T-cell (primary cell): ENCODE measurements at regions of chr5 and their contacts with region 1.

Region 1: DNA sequence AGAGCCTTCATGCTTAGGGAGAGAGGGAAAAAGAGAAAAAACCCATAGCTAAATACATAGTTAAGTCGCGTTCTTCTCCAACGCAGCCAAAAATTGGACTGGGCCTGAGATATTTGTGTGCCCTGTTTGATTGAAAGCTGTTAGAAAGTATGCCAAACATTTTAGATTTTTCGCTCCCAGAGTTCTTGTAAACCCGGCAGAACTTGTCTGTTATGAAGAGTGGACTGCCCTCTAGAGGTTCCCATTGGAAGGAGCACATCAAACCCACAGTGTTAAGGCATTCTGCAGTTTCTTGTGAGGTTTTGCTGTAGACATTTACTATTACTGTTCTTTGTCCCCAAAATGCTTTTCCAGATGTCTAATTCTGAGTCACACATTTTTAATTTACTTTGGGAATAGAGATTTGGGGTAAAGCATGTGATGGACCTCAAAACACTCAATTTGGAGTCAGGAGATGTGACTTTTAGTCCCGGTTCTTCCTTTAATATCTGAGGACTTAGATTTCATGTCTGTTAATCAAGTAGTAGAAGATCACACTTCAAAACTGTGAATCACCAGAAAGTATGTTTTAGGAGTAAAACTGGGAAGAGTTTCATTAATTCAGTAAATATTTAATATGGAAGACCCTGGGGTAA is 96.6 kb downstream of the PCSK1 start:
- DNase-seq: peak in 33 of 35 experiments; percentile 3 to 81 (median 43)
- ATAC-seq: peak; percentile 81 to 92 (median 84)
- H3K4me3 ChIP-seq: no peak overlapping the region
- H3K4me3 Mint-ChIP-seq: no peak overlapping the region
- H3K27ac ChIP-seq: no peak overlapping the region
- H3K27ac Mint-ChIP-seq: no peak overlapping the region
- H3K4me1 ChIP-seq: no peaks in the 10 kb centered on the region
- H3K4me1 Mint-ChIP-seq: no peaks in the 10 kb centered on the region
- H3K27me3 ChIP-seq: peaks cover 0 to 10% of the 10 kb centered on the region in 2 experiments
- H3K27me3 Mint-ChIP-seq: peaks cover 9 to 16% of the 10 kb centered on the region in 2 donors

Region 2: DNA sequence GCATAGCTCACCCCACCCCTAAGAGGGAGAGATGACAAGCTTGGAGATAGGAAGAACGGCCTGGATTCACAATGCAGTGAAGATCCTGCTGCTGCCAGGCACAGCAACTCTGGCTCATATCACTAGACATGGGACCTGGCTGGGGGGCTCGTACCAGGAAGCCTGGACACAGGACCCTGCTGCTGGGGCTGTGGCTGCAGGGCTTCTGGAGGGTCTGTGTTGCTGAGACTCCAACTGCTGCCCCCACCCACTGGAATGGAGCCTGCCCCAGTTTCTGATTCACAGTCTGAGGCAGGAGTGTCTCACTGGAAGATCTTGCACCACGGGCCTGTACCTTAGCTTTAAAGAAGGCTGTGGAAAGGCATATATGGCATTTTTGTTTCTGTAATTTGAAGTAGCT is 483.0 kb before region 1 on chr5:
- CTCF ChIA-PET with region 1: interaction called, 6 to 42 read pairs
- POLR2A ChIA-PET with region 1: no interaction called
- DNase-seq: no peak
- ATAC-seq: no peak
- H3K4me3 ChIP-seq: no peak overlapping the region
- H3K4me3 Mint-ChIP-seq: no peak overlapping the region
- H3K27ac ChIP-seq: no peak overlapping the region
- H3K27ac Mint-ChIP-seq: no peak overlapping the region
- H3K4me1 ChIP-seq: peaks cover 0 to 2% of the 10 kb centered on the region in 2 experiments
- H3K4me1 Mint-ChIP-seq: peaks cover 0 to 4% (median 3%) of the 10 kb centered on the region in 3 donors
- H3K27me3 ChIP-seq: peaks cover 0 to 12% of the 10 kb centered on the region in 2 experiments
- H3K27me3 Mint-ChIP-seq: peaks cover 0 to 3% of the 10 kb centered on the region in 2 donors

Region 3: GRCh38 chr5:95858661-95859326 is 477.7 kb before region 1 on chr5:
- CTCF ChIA-PET with region 1: interaction called, 10 to 42 read pairs
- POLR2A ChIA-PET with region 1: no interaction called
- DNase-seq: peak; percentile 71 to 92 (median 86)
- ATAC-seq: peak; percentile 92 to 97 (median 94)
- H3K4me3 ChIP-seq: peak overlapping the region; percentile 16 to 26
- H3K4me3 Mint-ChIP-seq: peak overlapping the region in 2 of 3 donors; percentile 36 to 59
- H3K27ac ChIP-seq: no peak overlapping the region
- H3K27ac Mint-ChIP-seq: peak overlapping the region; percentile 60 to 64
- H3K4me1 ChIP-seq: peaks cover 6 to 12% of the 10 kb centered on the region in 2 experiments
- H3K4me1 Mint-ChIP-seq: peaks cover 28 to 46% (median 41%) of the 10 kb centered on the region in 3 donors
- H3K27me3 ChIP-seq: peaks cover 0 to 11% of the 10 kb centered on the region in 2 experiments
- H3K27me3 Mint-ChIP-seq: peaks cover 9 to 15% of the 10 kb centered on the region in 2 donors

Region 4: GRCh38 chr5:96235008-96235910 is 101.2 kb before region 1 on chr5:
- CTCF ChIA-PET with region 1: no interaction called
- POLR2A ChIA-PET with region 1: no interaction called
- DNase-seq: no peak
- ATAC-seq: no peak
- H3K4me3 ChIP-seq: no peak overlapping the region
- H3K4me3 Mint-ChIP-seq: no peak overlapping the region
- H3K27ac ChIP-seq: no peak overlapping the region
- H3K27ac Mint-ChIP-seq: no peak overlapping the region
- H3K4me1 ChIP-seq: no peaks in the 10 kb centered on the region
- H3K4me1 Mint-ChIP-seq: no peaks in the 10 kb centered on the region
- H3K27me3 ChIP-seq: no peaks in the 10 kb centered on the region
- H3K27me3 Mint-ChIP-seq: peaks cover 0 to 3% of the 10 kb centered on the region in 2 donors

Region 5: DNA sequence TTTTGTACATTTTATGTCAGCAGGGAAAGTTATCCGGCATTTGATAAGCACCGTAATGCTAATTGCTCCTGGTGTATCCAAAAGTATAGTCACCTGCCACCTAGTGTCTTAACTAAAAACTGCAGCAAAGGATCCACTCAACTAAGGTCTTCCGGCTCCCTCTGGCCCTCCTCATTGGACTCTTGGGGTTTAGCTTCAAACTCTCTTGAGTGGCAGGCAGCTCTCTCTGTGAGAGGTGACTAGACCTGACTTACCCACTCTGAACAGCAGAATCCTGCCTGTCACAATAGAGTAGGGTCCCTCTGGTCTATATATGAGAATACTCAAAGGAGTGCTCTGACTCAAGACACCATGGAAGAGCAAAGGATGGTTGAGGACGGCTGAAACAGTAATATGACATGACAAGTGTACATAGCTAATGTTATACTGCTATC is 265.4 kb after region 1 on chr5:
- CTCF ChIA-PET with region 1: interaction called, 10 to 162 read pairs
- POLR2A ChIA-PET with region 1: no interaction called
- DNase-seq: peak in 27 of 35 experiments; percentile 8 to 81 (median 31)
- ATAC-seq: peak; percentile 66 to 80 (median 76)
- H3K4me3 ChIP-seq: no peak overlapping the region
- H3K4me3 Mint-ChIP-seq: no peak overlapping the region
- H3K27ac ChIP-seq: no peak overlapping the region
- H3K27ac Mint-ChIP-seq: no peak overlapping the region
- H3K4me1 ChIP-seq: no peaks in the 10 kb centered on the region
- H3K4me1 Mint-ChIP-seq: peaks cover 0 to 3% (median 2%) of the 10 kb centered on the region in 3 donors
- H3K27me3 ChIP-seq: no peaks in the 10 kb centered on the region
- H3K27me3 Mint-ChIP-seq: peaks cover 8 to 12% of the 10 kb centered on the region in 2 donors